ENCODE measurements at regions of chr12 and their contacts with region 1.

Region 1: GRCh38 chr12:51118706-51119105 is 35.3 kb upstream of the CSRNP2 start:
- DNase-seq: no peak
- ATAC-seq: no peak
- H3K4me3 ChIP-seq: no peak overlapping the region
- H3K4me3 Mint-ChIP-seq: no peak overlapping the region
- H3K27ac ChIP-seq: no peak overlapping the region
- H3K27ac Mint-ChIP-seq: no peak overlapping the region
- H3K4me1 ChIP-seq: no peaks in the 10 kb centered on the region
- H3K4me1 Mint-ChIP-seq: no peaks in the 10 kb centered on the region
- H3K27me3 ChIP-seq: no peaks in the 10 kb centered on the region
- H3K27me3 Mint-ChIP-seq: no peaks in the 10 kb centered on the region

Region 2: DNA sequence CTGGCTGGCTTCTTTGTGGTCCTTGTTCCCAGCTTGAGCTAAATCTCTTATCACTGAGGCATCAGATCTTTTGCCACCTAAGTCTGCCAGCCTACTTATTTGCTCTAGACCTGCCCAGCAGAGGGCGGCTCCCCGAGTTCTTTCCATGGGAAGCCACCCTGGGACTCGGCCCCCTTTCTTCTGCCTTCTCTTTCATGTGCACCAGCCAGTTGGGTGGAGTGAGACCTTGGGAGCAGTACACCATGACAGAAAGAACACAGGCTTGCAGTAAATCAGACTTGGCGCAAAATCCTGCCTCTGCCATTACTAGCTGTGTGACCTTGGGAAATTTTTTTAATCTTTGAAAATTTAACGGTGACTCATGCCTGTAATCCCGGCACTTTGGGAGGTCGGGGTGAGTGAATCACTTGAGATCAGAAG is 144.1 kb after region 1 on chr12:
- CTCF ChIA-PET with region 1: interaction called in 1 of 2 experiments, 10 read pairs
- POLR2A ChIA-PET with region 1: no interaction called
- DNase-seq: peak in 10 of 35 experiments; percentile 12 to 54 (median 26)
- ATAC-seq: peak in 3 of 4 experiments; percentile 38 to 55 (median 53)
- H3K4me3 ChIP-seq: no peak overlapping the region
- H3K4me3 Mint-ChIP-seq: no peak overlapping the region
- H3K27ac ChIP-seq: no peak overlapping the region
- H3K27ac Mint-ChIP-seq: no peak overlapping the region
- H3K4me1 ChIP-seq: peaks cover 0 to 3% of the 10 kb centered on the region in 2 experiments
- H3K4me1 Mint-ChIP-seq: peaks cover 16 to 24% (median 22%) of the 10 kb centered on the region in 3 donors
- H3K27me3 ChIP-seq: no peaks in the 10 kb centered on the region
- H3K27me3 Mint-ChIP-seq: no peaks in the 10 kb centered on the region